ENCODE measurements at regions of chr20 and their contacts with region 1.

Region 1: GRCh38 chr20:51306503-51307358 is 235.8 kb downstream of the NFATC2 start:
- DNase-seq: peak; percentile 84
- ATAC-seq: peak; percentile 94
- H3K4me3 ChIP-seq: no peak overlapping the region
- H3K27ac ChIP-seq: no peak overlapping the region
- H3K4me1 ChIP-seq: peaks cover 3% of the 10 kb centered on the region
- H3K27me3 ChIP-seq: no peaks in the 10 kb centered on the region
- CTCF ChIP-seq: peak; percentile 94

Region 2: GRCh38 chr20:50987592-50988210 is 319.0 kb before region 1 on chr20:
- intact Hi-C with region 1: loop called (anchors 5 kb)
- DNase-seq: no peak
- ATAC-seq: peak; percentile 98
- H3K4me3 ChIP-seq: no peak overlapping the region
- H3K27ac ChIP-seq: no peak overlapping the region
- H3K4me1 ChIP-seq: no peaks in the 10 kb centered on the region
- H3K27me3 ChIP-seq: peaks cover 28% of the 10 kb centered on the region
- CTCF ChIP-seq: peak; percentile 90

Region 3: DNA sequence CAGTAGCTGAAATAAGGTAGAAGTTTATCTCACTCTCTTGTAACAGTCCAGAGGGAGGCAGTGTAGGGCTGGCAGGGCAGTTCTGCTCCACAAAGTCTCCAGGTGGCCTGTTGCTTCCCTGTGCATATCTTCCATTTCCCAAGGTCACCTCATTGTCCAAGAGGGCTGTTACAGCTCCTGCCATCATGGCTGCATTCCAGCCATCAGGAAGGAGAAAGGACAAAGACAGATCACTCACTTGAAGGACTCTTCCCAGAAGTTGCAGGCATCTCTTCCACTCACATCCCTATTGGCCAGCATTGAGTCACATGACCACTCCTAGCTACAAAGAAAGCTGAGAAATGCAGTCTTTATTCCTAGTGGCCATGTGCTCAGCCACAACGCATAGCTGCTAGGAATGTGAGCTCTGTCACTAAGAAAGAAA is 133.7 kb before region 1 on chr20:
- intact Hi-C with region 1: no loop called
- DNase-seq: no peak
- ATAC-seq: no peak
- H3K4me3 ChIP-seq: no peak overlapping the region
- H3K27ac ChIP-seq: no peak overlapping the region
- H3K4me1 ChIP-seq: no peaks in the 10 kb centered on the region
- H3K27me3 ChIP-seq: peaks cover 22% of the 10 kb centered on the region
- CTCF ChIP-seq: no peak